CD4-positive, alpha-beta T cell (primary cell): ENCODE measurements at regions of chr6 and their contacts with region 1.

Region 1: DNA sequence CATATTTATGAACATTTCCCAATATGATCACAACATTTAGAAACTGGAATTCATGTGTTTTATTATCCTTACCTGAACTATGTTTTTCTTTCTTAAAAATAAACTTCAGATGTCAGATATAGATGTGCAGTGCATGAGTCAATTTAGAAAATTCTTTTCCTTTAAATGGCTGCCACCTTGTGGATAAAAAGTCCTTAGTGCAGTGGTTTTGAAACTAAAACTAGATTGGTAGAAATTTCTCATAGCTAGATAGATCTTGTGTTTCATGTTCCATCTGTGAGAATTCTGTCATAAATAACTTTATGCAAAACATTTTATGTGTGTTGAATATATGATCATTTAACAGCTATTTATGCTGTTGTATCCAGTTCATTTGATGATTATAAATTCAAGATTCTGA is 134.9 kb downstream of the KLHL32 start:
- DNase-seq: peak in 3 of 14 experiments; percentile 49 to 55 (median 49)
- ATAC-seq: peak; percentile 32
- H3K4me3 ChIP-seq: no peak overlapping the region
- H3K4me3 Mint-ChIP-seq: no peak overlapping the region
- H3K27ac ChIP-seq: no peak overlapping the region
- H3K27ac Mint-ChIP-seq: no peak overlapping the region
- H3K4me1 ChIP-seq: no peaks in the 10 kb centered on the region
- H3K4me1 Mint-ChIP-seq: no peaks in the 10 kb centered on the region
- H3K27me3 ChIP-seq: no peaks in the 10 kb centered on the region
- H3K27me3 Mint-ChIP-seq: no peaks in the 10 kb centered on the region
- CTCF ChIP-seq: peak; percentile 69

Region 2: DNA sequence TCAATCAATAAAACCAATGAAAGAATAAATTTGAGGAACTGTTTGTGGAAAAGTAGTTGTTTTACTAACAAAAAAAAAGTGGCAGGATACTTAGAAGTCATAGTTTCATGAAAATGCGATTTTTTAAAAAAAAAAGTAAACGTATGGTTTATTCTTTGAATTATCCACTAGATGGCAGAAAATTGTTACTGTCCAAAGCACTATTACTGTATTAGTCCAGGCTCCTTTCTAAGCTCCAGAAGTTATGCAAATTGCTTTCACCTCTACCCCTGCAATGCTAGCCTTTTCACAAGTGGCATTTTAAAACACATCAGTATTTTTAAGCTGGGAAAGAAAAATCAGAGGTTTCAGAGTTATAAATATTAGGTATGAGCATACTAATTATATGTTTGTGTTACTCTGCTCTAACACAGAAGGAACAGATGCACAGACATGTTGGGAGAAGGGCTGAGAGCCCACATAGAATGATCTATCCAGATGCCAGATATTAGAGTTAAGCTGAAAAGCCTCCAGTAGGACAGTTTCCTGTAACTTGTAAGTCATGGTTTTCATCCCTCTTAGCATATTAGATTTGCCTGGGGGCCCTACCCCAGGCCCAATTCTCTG is 432.6 kb before region 1 on chr6:
- CTCF ChIA-PET with region 1: interaction called, 10 read pairs
- POLR2A ChIA-PET with region 1: no interaction called
- intact Hi-C with region 1: loop called (anchors 1 to 2 kb)
- DNase-seq: peak in 3 of 14 experiments; percentile 21 to 39 (median 30)
- ATAC-seq: peak; percentile 41
- H3K4me3 ChIP-seq: no peak overlapping the region
- H3K4me3 Mint-ChIP-seq: no peak overlapping the region
- H3K27ac ChIP-seq: no peak overlapping the region
- H3K27ac Mint-ChIP-seq: no peak overlapping the region
- H3K4me1 ChIP-seq: no peaks in the 10 kb centered on the region
- H3K4me1 Mint-ChIP-seq: no peaks in the 10 kb centered on the region
- H3K27me3 ChIP-seq: no peaks in the 10 kb centered on the region
- H3K27me3 Mint-ChIP-seq: peaks cover 18% of the 10 kb centered on the region
- CTCF ChIP-seq: peak; percentile 57

Region 3: DNA sequence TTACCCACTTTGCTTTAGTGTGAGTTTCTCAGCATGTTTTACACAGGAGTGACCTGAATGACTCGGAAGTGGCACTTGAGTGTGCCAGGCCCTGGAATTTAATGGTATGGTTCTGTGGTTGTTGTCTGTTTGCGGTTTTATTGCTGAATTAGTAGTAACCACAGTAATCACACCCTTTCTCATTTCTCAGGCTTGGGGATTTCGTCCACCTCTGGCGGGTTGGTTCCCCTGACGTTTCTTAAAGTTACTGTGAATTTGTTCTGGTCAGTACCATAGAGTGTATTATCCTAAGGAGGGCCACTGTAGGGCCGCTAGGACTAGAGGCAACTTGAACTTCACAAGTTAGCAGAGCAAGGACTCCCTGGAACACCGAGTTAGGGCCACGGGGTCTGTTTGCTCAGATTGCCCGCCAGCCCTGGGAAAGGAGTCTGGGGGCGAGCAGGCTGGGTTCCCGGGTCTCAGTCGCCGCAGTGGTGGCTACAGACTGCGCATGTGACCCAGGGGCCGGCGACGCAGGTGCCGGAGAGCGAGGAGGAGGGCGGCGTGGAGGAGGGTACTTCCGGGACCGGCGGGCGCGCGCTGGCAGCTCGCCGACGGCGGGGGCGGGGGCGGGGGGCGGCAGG is 135.5 kb before region 1 on chr6:
- CTCF ChIA-PET with region 1: no interaction called
- POLR2A ChIA-PET with region 1: no interaction called
- intact Hi-C with region 1: loop called in 1 of 2 experiments (anchors 10 kb)
- DNase-seq: peak in 5 of 14 experiments; percentile 0 to 74 (median 2)
- ATAC-seq: no peak
- H3K4me3 ChIP-seq: peak overlapping the region; percentile 72
- H3K4me3 Mint-ChIP-seq: peak overlapping the region; percentile 93
- H3K27ac ChIP-seq: peak overlapping the region; percentile 93 to 96
- H3K27ac Mint-ChIP-seq: peak overlapping the region; percentile 98
- H3K4me1 ChIP-seq: peaks cover 17% of the 10 kb centered on the region
- H3K4me1 Mint-ChIP-seq: peaks cover 35% of the 10 kb centered on the region
- H3K27me3 ChIP-seq: no peaks in the 10 kb centered on the region
- H3K27me3 Mint-ChIP-seq: no peaks in the 10 kb centered on the region
- CTCF ChIP-seq: no peak

Region 4: GRCh38 chr6:97174471-97174870 is 115.0 kb after region 1 on chr6:
- CTCF ChIA-PET with region 1: no interaction called
- POLR2A ChIA-PET with region 1: no interaction called
- intact Hi-C with region 1: no loop called
- DNase-seq: no peak
- ATAC-seq: no peak
- H3K4me3 ChIP-seq: no peak overlapping the region
- H3K4me3 Mint-ChIP-seq: no peak overlapping the region
- H3K27ac ChIP-seq: no peak overlapping the region
- H3K27ac Mint-ChIP-seq: no peak overlapping the region
- H3K4me1 ChIP-seq: no peaks in the 10 kb centered on the region
- H3K4me1 Mint-ChIP-seq: no peaks in the 10 kb centered on the region
- H3K27me3 ChIP-seq: no peaks in the 10 kb centered on the region
- H3K27me3 Mint-ChIP-seq: no peaks in the 10 kb centered on the region
- CTCF ChIP-seq: no peak